Ovary (tissue), 10 donors: ENCODE measurements at regions of chrX and their contacts with region 1.

Region 1: DNA sequence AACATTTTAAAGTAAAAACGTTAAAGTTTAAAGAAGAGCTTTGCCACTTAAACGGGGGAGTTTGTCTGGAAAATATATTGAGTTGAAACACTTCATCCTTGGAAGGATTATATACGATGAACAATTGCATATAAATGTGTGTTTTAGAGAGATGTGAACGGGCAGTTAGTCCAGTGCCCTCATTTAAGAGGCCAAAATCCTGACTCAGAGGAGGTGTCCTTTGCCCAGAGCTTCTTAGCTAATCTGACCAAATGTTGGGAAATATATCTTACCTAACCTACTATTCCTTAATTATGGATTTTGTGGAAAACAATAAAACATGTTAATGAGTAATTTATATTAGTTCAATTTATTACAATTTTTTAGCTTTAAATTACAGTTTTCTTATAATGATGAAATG is 327.2 kb upstream of the DIPK2B start:
- DNase-seq: no peak
- H3K4me3 ChIP-seq: no peak overlapping the region
- H3K27ac ChIP-seq: no peak overlapping the region
- H3K4me1 ChIP-seq: no peaks in the 10 kb centered on the region
- H3K27me3 ChIP-seq: no peaks in the 10 kb centered on the region
- CTCF ChIP-seq: no peak
- EP300 ChIP-seq: no peak
- POLR2A ChIP-seq: no peak

Region 2: DNA sequence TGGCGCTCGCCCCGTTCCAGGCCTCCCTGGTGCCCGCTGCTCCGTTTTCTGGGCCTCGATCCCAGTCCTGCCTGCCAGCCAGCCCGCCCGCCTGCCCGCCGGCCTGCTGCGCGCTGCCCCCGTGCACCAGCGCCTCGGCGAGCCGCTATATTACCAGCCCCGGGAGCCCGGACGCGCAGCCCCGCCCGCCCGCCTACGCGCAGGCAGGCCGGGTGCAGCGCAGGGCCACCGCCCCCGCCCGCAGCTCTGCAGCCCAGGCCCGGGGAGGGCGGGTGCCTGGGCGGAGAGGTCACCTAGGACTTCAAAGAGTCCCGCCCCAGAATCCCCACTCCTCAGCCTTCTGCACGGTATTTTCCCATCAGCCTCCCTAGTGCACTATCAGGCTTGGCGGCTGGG is 1645.5 kb before region 1 on chrX and contains the start of gene MAOB:
- intact Hi-C with region 1: no loop called
- DNase-seq: peak; percentile 53 to 76 (median 62)
- H3K4me3 ChIP-seq: peak within 1 kb of the TSS; percentile 51
- H3K27ac ChIP-seq: peak within 1 kb of the TSS; percentile 50 to 86
- H3K4me1 ChIP-seq: peaks cover 2% of the 10 kb centered on the region
- H3K27me3 ChIP-seq: no peaks in the 10 kb centered on the region
- CTCF ChIP-seq: no peak
- EP300 ChIP-seq: no peak
- POLR2A ChIP-seq: no peak
- total RNA-seq, gene MAOB: 57.2 to 213 (median 132) TPM

Region 3: GRCh38 chrX:45502396-45502795 is 25.4 kb before region 1 on chrX:
- intact Hi-C with region 1: loop called in 1 of 4 experiments (anchors 1 kb)
- DNase-seq: no peak
- H3K4me3 ChIP-seq: no peak overlapping the region
- H3K27ac ChIP-seq: no peak overlapping the region
- H3K4me1 ChIP-seq: no peaks in the 10 kb centered on the region
- H3K27me3 ChIP-seq: no peaks in the 10 kb centered on the region
- CTCF ChIP-seq: no peak
- EP300 ChIP-seq: no peak
- POLR2A ChIP-seq: no peak

Region 4: GRCh38 chrX:46036508-46036907 is 508.7 kb after region 1 on chrX:
- intact Hi-C with region 1: no loop called
- DNase-seq: no peak
- H3K4me3 ChIP-seq: no peak overlapping the region
- H3K27ac ChIP-seq: no peak overlapping the region
- H3K4me1 ChIP-seq: no peaks in the 10 kb centered on the region
- H3K27me3 ChIP-seq: no peaks in the 10 kb centered on the region
- CTCF ChIP-seq: no peak
- EP300 ChIP-seq: no peak
- POLR2A ChIP-seq: no peak